ENCODE measurements at regions of chr6 and their contacts with region 1.

Region 1: GRCh38 chr6:26537846-26538571 is at the start of gene HMGN4:
- DNase-seq: peak; percentile 64 to 97 (median 95)
- ATAC-seq: peak; percentile 79
- H3K4me3 ChIP-seq: peak within 1 kb of the TSS; percentile 76
- H3K4me3 Mint-ChIP-seq: peak within 1 kb of the TSS; percentile 88 to 99 (median 94)
- H3K27ac ChIP-seq: peak within 1 kb of the TSS; percentile 88
- H3K27ac Mint-ChIP-seq: peak within 1 kb of the TSS; percentile 91 to 99 (median 98)
- H3K4me1 ChIP-seq: peaks cover 20 to 23% of the 10 kb centered on the region in 2 donors
- H3K4me1 Mint-ChIP-seq: peaks cover 46 to 72% (median 60%) of the 10 kb centered on the region in 7 donors
- H3K27me3 ChIP-seq: no peaks in the 10 kb centered on the region
- H3K27me3 Mint-ChIP-seq: peaks cover 0 to 5% (median 0%) of the 10 kb centered on the region in 5 donors
- total RNA-seq, gene HMGN4: 37.6 to 96.0 (median 81.7) TPM

Region 2: GRCh38 chr6:26312501-26313390 is 225.3 kb before region 1 on chr6:
- CTCF ChIA-PET with region 1: no interaction called
- POLR2A ChIA-PET with region 1: interaction called, 4 read pairs
- intact Hi-C with region 1: loop called (anchors 1 kb)
- DNase-seq: peak; percentile 64 to 91 (median 86)
- ATAC-seq: peak; percentile 75
- H3K4me3 ChIP-seq: peak overlapping the region; percentile 81
- H3K4me3 Mint-ChIP-seq: peak overlapping the region; percentile 83 to 100 (median 96)
- H3K27ac ChIP-seq: peak overlapping the region; percentile 55
- H3K27ac Mint-ChIP-seq: peak overlapping the region; percentile 82 to 100 (median 96)
- H3K4me1 ChIP-seq: peaks cover 4 to 19% of the 10 kb centered on the region in 2 donors
- H3K4me1 Mint-ChIP-seq: peaks cover 5 to 51% (median 37%) of the 10 kb centered on the region in 7 donors
- H3K27me3 ChIP-seq: no peaks in the 10 kb centered on the region
- H3K27me3 Mint-ChIP-seq: peaks cover 0 to 8% (median 0%) of the 10 kb centered on the region in 5 donors

Region 3: DNA sequence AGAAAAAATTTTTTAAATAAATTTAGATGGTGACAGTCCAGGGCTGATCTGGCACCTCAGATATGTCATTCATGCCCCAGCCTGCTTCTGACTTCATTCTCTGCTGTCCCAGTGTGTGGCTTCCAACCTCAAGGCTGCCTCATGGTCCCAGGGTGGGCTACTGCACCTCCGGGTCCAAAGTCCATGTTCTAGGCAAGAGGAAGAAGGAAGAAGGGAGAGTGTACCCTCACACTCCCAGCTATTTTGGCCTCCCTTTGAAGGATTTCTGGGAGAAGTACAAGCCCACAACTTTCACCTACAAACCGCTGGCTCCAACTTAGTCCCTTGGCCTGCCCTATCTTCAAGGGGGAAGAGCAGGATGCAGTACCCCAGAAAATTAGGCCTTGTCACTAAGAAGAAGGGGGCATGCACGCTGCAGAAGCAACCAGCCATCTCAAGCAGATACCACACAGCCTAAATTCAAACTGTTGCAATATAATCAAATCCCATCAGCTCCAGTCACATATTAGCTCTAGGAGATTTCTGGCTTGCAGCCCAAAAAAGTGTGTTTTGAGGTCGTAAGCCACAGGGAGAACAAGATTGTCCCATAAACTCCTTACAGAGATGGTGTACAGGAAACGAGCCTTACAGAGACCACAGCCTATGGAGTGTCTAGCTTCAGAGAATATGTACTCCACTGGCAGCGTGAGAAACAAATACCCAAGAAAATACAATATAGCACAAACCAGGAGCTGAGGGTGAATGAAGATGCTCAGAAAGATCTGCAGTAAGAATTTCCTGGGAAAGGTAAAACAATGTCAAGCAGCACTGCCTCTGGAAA is 173.9 kb before region 1 on chr6:
- CTCF ChIA-PET with region 1: no interaction called
- POLR2A ChIA-PET with region 1: interaction called, 11 read pairs
- intact Hi-C with region 1: loop called in 1 of 2 experiments (anchors 2 kb)
- DNase-seq: peak in 7 of 9 donors; percentile 22 to 51 (median 45)
- ATAC-seq: peak; percentile 24
- H3K4me3 ChIP-seq: peak overlapping the region; percentile 89
- H3K4me3 Mint-ChIP-seq: no peak overlapping the region
- H3K27ac ChIP-seq: peak overlapping the region; percentile 92
- H3K27ac Mint-ChIP-seq: no peak overlapping the region
- H3K4me1 ChIP-seq: peaks cover 32 to 37% of the 10 kb centered on the region in 2 donors
- H3K4me1 Mint-ChIP-seq: peaks cover 43 to 67% (median 56%) of the 10 kb centered on the region in 7 donors
- H3K27me3 ChIP-seq: no peaks in the 10 kb centered on the region
- H3K27me3 Mint-ChIP-seq: no peaks in the 10 kb centered on the region

Region 4: DNA sequence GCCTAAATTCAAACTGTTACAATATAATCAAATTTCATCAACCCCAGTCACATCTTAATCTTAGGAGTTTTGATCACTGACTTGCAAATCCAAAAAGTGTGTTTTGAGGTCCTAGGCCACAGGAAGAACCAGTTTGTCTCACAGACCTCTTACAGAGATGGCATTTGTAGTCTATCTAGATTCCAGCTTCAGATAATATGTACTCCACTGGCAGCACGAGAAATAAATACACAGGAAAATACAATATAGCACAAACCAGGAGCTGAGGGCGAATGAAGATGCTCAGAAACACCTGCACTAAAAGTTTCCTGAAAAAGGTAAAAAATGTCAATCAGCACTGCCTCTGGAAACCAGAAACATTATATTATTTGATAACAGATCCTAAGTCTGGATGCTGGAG is 98.4 kb before region 1 on chr6:
- CTCF ChIA-PET with region 1: no interaction called
- POLR2A ChIA-PET with region 1: interaction called, 4 read pairs
- intact Hi-C with region 1: loop called in 1 of 2 experiments (anchors 1 kb)
- DNase-seq: peak in 3 of 9 donors; percentile 7 to 35 (median 15)
- ATAC-seq: no peak
- H3K4me3 ChIP-seq: peak overlapping the region; percentile 94
- H3K4me3 Mint-ChIP-seq: peak overlapping the region; percentile 89 to 100 (median 98)
- H3K27ac ChIP-seq: peak overlapping the region; percentile 99
- H3K27ac Mint-ChIP-seq: peak overlapping the region; percentile 95 to 100 (median 99)
- H3K4me1 ChIP-seq: peaks cover 16 to 19% of the 10 kb centered on the region in 2 donors
- H3K4me1 Mint-ChIP-seq: peaks cover 27 to 52% (median 41%) of the 10 kb centered on the region in 7 donors
- H3K27me3 ChIP-seq: no peaks in the 10 kb centered on the region
- H3K27me3 Mint-ChIP-seq: no peaks in the 10 kb centered on the region

Region 5: GRCh38 chr6:26553635-26554446 is 15.8 kb after region 1 on chr6:
- CTCF ChIA-PET with region 1: interaction called, 5 read pairs
- POLR2A ChIA-PET with region 1: interaction called, 101 read pairs
- intact Hi-C with region 1: loop called (anchors 1 kb)
- DNase-seq: peak; percentile 44 to 86 (median 83)
- ATAC-seq: peak; percentile 66
- H3K4me3 ChIP-seq: peak overlapping the region; percentile 75
- H3K4me3 Mint-ChIP-seq: no peak overlapping the region
- H3K27ac ChIP-seq: peak overlapping the region; percentile 65
- H3K27ac Mint-ChIP-seq: no peak overlapping the region
- H3K4me1 ChIP-seq: peaks cover 7 to 18% of the 10 kb centered on the region in 2 donors
- H3K4me1 Mint-ChIP-seq: peaks cover 12 to 35% (median 24%) of the 10 kb centered on the region in 7 donors
- H3K27me3 ChIP-seq: no peaks in the 10 kb centered on the region
- H3K27me3 Mint-ChIP-seq: peaks cover 0 to 2% (median 0%) of the 10 kb centered on the region in 5 donors

Region 6: GRCh38 chr6:27414996-27415395 is 877.0 kb after region 1 on chr6:
- CTCF ChIA-PET with region 1: no interaction called
- POLR2A ChIA-PET with region 1: no interaction called
- intact Hi-C with region 1: no loop called
- DNase-seq: no peak
- ATAC-seq: no peak
- H3K4me3 ChIP-seq: no peak overlapping the region
- H3K4me3 Mint-ChIP-seq: no peak overlapping the region
- H3K27ac ChIP-seq: no peak overlapping the region
- H3K27ac Mint-ChIP-seq: no peak overlapping the region
- H3K4me1 ChIP-seq: no peaks in the 10 kb centered on the region
- H3K4me1 Mint-ChIP-seq: no peaks in the 10 kb centered on the region
- H3K27me3 ChIP-seq: no peaks in the 10 kb centered on the region
- H3K27me3 Mint-ChIP-seq: peaks cover 0 to 24% (median 8%) of the 10 kb centered on the region in 5 donors

Region 7: DNA sequence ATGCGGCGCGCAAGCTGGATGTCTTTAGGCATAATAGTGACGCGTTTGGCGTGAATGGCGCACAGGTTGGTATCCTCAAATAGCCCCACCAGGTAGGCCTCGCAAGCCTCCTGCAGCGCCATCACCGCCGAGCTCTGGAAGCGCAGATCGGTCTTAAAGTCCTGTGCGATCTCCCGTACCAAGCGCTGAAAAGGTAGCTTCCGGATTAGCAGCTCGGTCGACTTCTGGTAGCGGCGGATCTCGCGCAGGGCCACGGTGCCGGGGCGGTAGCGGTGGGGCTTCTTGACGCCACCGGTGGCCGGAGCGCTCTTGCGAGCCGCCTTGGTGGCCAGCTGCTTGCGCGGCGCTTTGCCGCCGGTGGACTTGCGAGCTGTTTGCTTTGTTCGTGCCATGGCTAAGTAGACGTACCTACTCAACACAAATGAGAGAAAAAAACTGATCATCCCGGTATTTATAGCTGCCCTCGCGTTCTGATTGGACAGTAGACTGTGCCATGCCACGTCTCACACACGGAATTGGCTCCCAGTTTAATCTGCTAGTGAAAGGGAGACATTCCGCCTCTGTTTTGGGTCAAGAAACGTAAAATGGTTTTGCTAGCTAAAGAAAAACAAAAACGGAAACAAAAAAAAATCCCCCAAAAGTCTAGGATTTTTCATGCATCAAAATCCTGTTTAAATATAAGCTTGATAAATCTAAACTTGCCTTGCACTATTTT is 1334.1 kb after region 1 on chr6:
- CTCF ChIA-PET with region 1: no interaction called
- POLR2A ChIA-PET with region 1: no interaction called
- intact Hi-C with region 1: loop called in 1 of 2 experiments (anchors 5 kb)
- DNase-seq: peak; percentile 68 to 97 (median 94)
- ATAC-seq: peak; percentile 88
- H3K4me3 ChIP-seq: peak overlapping the region; percentile 69
- H3K4me3 Mint-ChIP-seq: peak overlapping the region; percentile 83 to 99 (median 94)
- H3K27ac ChIP-seq: peak overlapping the region; percentile 84
- H3K27ac Mint-ChIP-seq: peak overlapping the region; percentile 95 to 98 (median 97)
- H3K4me1 ChIP-seq: peaks cover under 1 to 19% of the 10 kb centered on the region in 2 donors
- H3K4me1 Mint-ChIP-seq: peaks cover 15 to 69% (median 42%) of the 10 kb centered on the region in 7 donors
- H3K27me3 ChIP-seq: no peaks in the 10 kb centered on the region
- H3K27me3 Mint-ChIP-seq: peaks cover 0 to 8% (median 0%) of the 10 kb centered on the region in 5 donors

Measured in naive thymus-derived CD4-positive, alpha-beta T cell (primary cell).